Activated naive CD8-positive, alpha-beta T cell treated with anti-CD3 and anti-CD28 coated beads, Interleukin-2, amount 10 ng/mL, durations not matched to agents 7 days and 5 days (primary cell): ENCODE measurements at regions of chr9 and their contacts with region 1.

Region 1: GRCh38 chr9:37119907-37120842 is at the start of gene ZCCHC7:
- DNase-seq: peak; percentile 97
- ATAC-seq: peak; percentile 98
- H3K4me3 Mint-ChIP-seq: peak within 1 kb of the TSS; percentile 95
- H3K27ac Mint-ChIP-seq: peak within 1 kb of the TSS; percentile 99
- H3K4me1 Mint-ChIP-seq: peaks cover 16% of the 10 kb centered on the region
- H3K27me3 Mint-ChIP-seq: no peaks in the 10 kb centered on the region
- total RNA-seq, gene ZCCHC7: 32.8 to 33.5 TPM

Region 2: GRCh38 chr9:37066139-37066725 is 53.9 kb before region 1 on chr9:
- POLR2A ChIA-PET with region 1: no interaction called
- DNase-seq: no peak
- ATAC-seq: no peak
- H3K4me3 Mint-ChIP-seq: no peak overlapping the region
- H3K27ac Mint-ChIP-seq: no peak overlapping the region
- H3K4me1 Mint-ChIP-seq: peaks cover 1% of the 10 kb centered on the region
- H3K27me3 Mint-ChIP-seq: peaks cover 23% of the 10 kb centered on the region

Region 3: GRCh38 chr9:37079370-37080164 is 40.6 kb before region 1 on chr9:
- POLR2A ChIA-PET with region 1: interaction called, 46 read pairs
- DNase-seq: peak; percentile 84
- ATAC-seq: peak; percentile 97
- H3K4me3 Mint-ChIP-seq: peak overlapping the region; percentile 91
- H3K27ac Mint-ChIP-seq: peak overlapping the region; percentile 95
- H3K4me1 Mint-ChIP-seq: peaks cover 29% of the 10 kb centered on the region
- H3K27me3 Mint-ChIP-seq: no peaks in the 10 kb centered on the region

Region 4: GRCh38 chr9:37104183-37104889 is 15.8 kb before region 1 on chr9:
- POLR2A ChIA-PET with region 1: interaction called, 11 read pairs
- DNase-seq: no peak
- ATAC-seq: peak; percentile 54
- H3K4me3 Mint-ChIP-seq: no peak overlapping the region
- H3K27ac Mint-ChIP-seq: no peak overlapping the region
- H3K4me1 Mint-ChIP-seq: peaks cover 20% of the 10 kb centered on the region
- H3K27me3 Mint-ChIP-seq: peaks cover 4% of the 10 kb centered on the region

Region 5: DNA sequence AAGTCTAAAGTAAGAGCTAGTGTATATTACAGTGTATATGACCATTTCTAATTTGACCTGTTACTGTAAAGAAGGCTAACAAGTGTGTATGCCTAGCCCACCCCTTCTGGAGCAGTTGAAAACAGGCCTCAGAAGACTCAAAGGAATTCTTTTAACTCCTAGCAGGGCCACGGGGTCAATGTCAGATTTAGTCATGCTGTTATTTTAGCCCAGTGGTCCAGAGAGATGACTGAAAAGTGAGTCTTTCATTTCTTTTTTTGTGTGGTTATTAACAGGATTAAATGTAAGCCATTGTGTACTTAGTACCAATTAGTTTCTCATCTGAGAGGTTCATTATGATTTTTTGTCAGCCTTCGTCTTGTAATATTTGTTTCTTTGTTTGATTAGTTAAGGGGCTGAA is 24.6 kb after region 1 on chr9:
- POLR2A ChIA-PET with region 1: interaction called, 19 read pairs
- DNase-seq: no peak
- ATAC-seq: no peak
- H3K4me3 Mint-ChIP-seq: no peak overlapping the region
- H3K27ac Mint-ChIP-seq: peak overlapping the region; percentile 56
- H3K4me1 Mint-ChIP-seq: peaks cover 21% of the 10 kb centered on the region
- H3K27me3 Mint-ChIP-seq: no peaks in the 10 kb centered on the region

Region 6: DNA sequence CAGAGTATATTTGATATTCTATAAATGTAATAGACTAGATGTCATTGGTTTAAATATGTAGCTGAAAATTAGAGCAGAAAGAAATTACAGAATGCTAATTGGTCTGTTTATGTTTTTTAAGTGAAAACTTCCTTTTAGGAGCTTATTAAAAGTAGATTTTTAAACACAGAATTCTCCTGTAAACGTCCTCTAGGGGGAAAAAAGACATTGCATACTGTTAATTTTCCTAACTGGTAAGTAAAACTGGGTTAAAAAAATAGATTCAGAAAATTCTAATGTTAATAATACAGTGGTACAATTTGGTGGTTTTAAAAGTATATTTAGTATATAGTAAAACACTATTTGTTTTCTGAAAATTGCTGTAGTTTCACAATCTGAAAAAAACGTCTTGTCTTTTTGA is 60.0 kb after region 1 on chr9:
- POLR2A ChIA-PET with region 1: no interaction called
- DNase-seq: no peak
- ATAC-seq: no peak
- H3K4me3 Mint-ChIP-seq: no peak overlapping the region
- H3K27ac Mint-ChIP-seq: no peak overlapping the region
- H3K4me1 Mint-ChIP-seq: peaks cover 11% of the 10 kb centered on the region
- H3K27me3 Mint-ChIP-seq: no peaks in the 10 kb centered on the region

Region 7: GRCh38 chr9:37302277-37302676 is 182.1 kb after region 1 on chr9:
- POLR2A ChIA-PET with region 1: interaction called, 30 read pairs
- DNase-seq: no peak
- ATAC-seq: peak; percentile 92
- H3K4me3 Mint-ChIP-seq: peak overlapping the region; percentile 67
- H3K27ac Mint-ChIP-seq: peak overlapping the region; percentile 85
- H3K4me1 Mint-ChIP-seq: peaks cover 48% of the 10 kb centered on the region
- H3K27me3 Mint-ChIP-seq: no peaks in the 10 kb centered on the region